ENCODE measurements at regions of chr5 and their contacts with region 1.

Region 1: DNA sequence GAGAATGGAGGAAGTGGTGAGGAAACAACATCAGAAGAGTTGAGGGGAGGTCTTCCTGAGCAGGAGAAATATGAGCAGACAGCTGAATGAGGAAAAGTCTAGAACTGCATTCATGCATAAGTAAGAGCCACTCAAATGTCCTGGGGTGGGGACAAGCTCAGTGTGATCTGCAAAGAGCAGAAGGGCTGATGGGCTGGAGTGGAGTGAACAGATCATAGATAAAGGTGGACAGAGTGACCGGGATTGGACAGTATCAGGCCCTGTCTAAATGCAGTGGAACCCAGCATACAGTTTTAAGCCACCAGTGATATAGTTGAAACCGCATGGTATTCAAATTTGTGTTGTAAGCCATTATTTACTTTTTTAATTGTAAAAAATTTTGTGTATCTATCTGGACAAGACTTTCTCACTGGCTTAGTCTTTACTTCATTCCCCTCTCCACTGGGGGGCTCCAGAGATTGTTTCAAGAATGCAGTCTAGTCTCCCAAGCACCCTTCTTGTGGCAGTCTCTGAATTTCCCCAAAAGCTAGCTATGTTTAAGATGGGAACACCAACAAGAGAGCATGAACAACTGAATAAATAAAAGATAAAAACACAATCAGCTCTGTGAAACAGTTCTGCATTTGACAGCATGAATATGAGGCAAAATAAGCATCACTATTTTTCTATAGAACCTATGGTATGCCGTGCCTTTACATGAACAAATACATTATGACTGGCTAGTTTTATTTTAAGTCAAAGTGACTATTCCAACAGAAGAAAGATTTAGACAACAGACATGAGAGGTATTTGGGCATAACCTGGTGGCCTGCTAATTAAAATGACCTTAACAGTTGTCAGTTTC is 10.7 kb upstream of the STK32A start:
- DNase-seq: peak in 1 of 3 donors; percentile 67
- ATAC-seq: peak; percentile 42
- H3K4me3 ChIP-seq: no peak overlapping the region
- H3K4me1 ChIP-seq: no peaks in the 10 kb centered on the region
- CTCF ChIP-seq: peak; percentile 26

Region 2: DNA sequence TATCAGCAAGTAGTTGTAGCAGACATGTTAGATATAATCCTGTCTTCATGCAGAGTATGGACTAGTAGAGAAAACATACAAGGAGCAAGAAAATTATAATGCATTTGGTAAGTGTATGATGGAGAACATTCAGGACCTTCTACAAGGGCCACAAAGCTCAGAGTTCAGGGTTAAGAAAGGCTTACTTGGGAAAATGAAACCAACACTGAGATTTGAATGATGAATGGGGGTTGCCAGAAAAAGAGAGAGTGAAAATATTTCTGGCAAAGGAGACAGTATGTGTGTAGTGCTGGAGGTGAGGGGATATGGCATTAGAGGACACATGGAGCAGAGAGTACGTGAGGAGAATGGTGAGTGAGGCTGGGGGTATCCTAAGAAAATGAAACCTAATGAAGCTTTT is 159.1 kb before region 1 on chr5:
- intact Hi-C with region 1: no loop called
- DNase-seq: no peak
- ATAC-seq: no peak
- H3K4me3 ChIP-seq: no peak overlapping the region
- H3K4me1 ChIP-seq: no peaks in the 10 kb centered on the region
- CTCF ChIP-seq: no peak

Region 3: GRCh38 chr5:147369742-147370374 is 145.7 kb after region 1 on chr5:
- intact Hi-C with region 1: loop called (anchors 2 to 10 kb)
- DNase-seq: no peak
- ATAC-seq: no peak
- H3K4me3 ChIP-seq: no peak overlapping the region
- H3K4me1 ChIP-seq: no peaks in the 10 kb centered on the region
- CTCF ChIP-seq: no peak

Region 4: DNA sequence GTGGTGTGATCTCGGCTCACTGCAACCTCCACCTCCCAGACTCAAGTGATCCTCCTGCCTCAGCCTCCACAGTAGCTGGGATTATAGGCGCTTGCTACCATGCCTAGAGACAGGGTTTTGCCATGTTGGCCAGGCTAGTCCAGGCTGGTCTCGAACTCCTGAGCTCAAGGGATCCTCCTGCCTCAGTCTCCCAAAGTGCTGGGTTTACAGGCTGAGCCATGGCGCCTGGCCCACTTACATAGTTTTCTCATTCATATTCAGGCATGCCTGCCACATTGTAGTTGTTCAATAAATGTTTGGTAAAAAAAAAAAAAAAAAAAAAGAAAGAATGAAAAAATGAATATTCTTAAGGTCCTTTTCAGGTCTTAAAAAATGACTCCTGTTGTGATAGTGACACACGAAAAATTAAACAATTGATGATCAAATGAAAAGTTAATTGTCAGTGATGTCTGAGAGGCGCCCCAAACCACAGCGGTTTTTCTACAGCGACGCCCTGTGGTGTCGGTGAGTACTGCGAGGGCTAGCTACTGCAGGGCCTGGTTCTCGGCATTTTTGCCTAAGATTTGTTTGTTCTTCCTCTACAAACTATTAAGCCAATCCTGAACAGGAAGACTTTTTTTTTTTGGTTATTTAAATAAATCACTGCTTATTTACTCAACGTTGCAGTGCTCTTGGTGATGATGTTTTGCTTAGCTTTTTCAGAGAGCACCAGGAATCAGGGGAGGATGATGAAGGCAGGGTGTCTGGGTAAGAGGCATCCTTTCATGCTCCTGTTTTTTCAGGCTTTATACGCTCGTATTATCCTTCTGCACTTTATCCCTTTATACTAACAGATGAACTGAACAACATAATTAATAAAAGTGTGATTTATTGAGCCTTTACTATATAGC is 352.7 kb after region 1 on chr5:
- intact Hi-C with region 1: loop called (anchors 5 to 10 kb)
- DNase-seq: peak in 2 of 3 donors; percentile 70 to 76
- ATAC-seq: peak; percentile 68
- H3K4me3 ChIP-seq: no peak overlapping the region
- H3K4me1 ChIP-seq: no peaks in the 10 kb centered on the region
- CTCF ChIP-seq: peak; percentile 69

Region 5: DNA sequence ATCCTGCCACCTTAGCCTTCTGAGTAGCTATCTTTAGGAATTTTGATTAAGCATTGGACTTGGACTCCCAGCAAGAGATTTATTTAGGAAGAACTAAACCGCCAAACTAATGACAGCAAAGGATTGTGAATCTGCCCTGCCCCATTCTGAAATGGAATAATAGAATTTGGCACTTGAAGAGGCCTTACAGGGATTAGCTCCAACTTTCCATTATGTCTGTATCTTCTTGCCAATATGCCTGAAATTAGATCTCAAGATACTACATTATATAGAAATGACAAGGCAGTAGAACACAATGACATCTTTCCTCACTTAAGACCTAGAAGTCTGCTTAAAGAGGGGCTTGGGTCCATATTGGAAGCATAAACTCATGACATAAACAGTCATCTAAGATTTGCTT is 362.7 kb after region 1 on chr5:
- intact Hi-C with region 1: loop called in 1 of 2 experiments (anchors 10 kb)
- DNase-seq: no peak
- ATAC-seq: no peak
- H3K4me3 ChIP-seq: no peak overlapping the region
- H3K4me1 ChIP-seq: no peaks in the 10 kb centered on the region
- CTCF ChIP-seq: no peak

Measured in mucosa of descending colon (tissue), 3 donors.